ENCODE measurements at regions of chr7 and their contacts with region 1.

Region 1: GRCh38 chr7:75738987-75739795 is 450 bp upstream of the HIP1 start:
- DNase-seq: peak; percentile 100
- H3K4me3 ChIP-seq: peak overlapping the region; percentile 78 to 99 (median 92)
- H3K27ac ChIP-seq: peak overlapping the region; percentile 90 to 94 (median 92)
- H3K4me1 ChIP-seq: peaks cover 0 to 21% (median 16%) of the 10 kb centered on the region in 4 donors
- H3K27me3 ChIP-seq: no peaks in the 10 kb centered on the region
- CTCF ChIP-seq: peak in 2 of 4 experiments; percentile 11 to 23
- EP300 ChIP-seq: no peak
- POLR2A ChIP-seq: peak in 1 of 2 donors; percentile 20

Region 2: GRCh38 chr7:75642810-75643486 is 96.2 kb before region 1 on chr7:
- intact Hi-C with region 1: loop called (anchors 2 kb)
- DNase-seq: no peak
- H3K4me3 ChIP-seq: no peak overlapping the region
- H3K27ac ChIP-seq: no peak overlapping the region
- H3K4me1 ChIP-seq: peaks cover 0 to 19% (median 16%) of the 10 kb centered on the region in 4 donors
- H3K27me3 ChIP-seq: no peaks in the 10 kb centered on the region
- CTCF ChIP-seq: peak in 3 of 4 experiments; percentile 34 to 72 (median 57)
- EP300 ChIP-seq: no peak
- POLR2A ChIP-seq: no peak

Measured in sigmoid colon (tissue), 7 donors.